Heart left ventricle (tissue), 16 donors: ENCODE measurements at regions of chr17 and their contacts with region 1.

Region 1: DNA sequence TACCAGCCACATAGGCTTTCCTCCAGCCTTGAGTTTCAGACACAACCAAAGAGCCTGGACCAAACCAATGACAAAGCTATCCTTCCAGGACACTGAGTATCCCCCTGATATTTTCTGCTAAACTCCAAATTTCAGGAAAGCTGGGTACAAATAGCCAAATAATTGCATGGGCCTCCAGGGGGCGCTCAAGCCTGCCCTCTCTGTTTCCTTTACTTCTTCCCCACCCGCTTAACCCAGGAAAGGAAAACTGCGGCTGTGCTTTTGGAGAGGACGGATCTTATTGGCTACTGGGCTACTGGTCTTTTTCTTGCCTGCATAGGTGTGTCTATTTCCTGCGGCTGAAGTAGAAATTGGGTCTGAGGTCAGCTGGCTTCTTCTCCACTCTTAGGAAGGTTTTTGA is 30.1 kb downstream of the GNGT2 start:
- DNase-seq: peak; percentile 55 to 74 (median 66)
- ATAC-seq: peak in 3 of 4 donors; percentile 34 to 75 (median 59)
- H3K4me3 ChIP-seq: no peak overlapping the region
- H3K27ac ChIP-seq: no peak overlapping the region
- H3K4me1 ChIP-seq: no peaks in the 10 kb centered on the region
- H3K27me3 ChIP-seq: no peaks in the 10 kb centered on the region
- CTCF ChIP-seq: peak; percentile 60 to 83 (median 76)
- POLR2A ChIP-seq: no peak

Region 2: DNA sequence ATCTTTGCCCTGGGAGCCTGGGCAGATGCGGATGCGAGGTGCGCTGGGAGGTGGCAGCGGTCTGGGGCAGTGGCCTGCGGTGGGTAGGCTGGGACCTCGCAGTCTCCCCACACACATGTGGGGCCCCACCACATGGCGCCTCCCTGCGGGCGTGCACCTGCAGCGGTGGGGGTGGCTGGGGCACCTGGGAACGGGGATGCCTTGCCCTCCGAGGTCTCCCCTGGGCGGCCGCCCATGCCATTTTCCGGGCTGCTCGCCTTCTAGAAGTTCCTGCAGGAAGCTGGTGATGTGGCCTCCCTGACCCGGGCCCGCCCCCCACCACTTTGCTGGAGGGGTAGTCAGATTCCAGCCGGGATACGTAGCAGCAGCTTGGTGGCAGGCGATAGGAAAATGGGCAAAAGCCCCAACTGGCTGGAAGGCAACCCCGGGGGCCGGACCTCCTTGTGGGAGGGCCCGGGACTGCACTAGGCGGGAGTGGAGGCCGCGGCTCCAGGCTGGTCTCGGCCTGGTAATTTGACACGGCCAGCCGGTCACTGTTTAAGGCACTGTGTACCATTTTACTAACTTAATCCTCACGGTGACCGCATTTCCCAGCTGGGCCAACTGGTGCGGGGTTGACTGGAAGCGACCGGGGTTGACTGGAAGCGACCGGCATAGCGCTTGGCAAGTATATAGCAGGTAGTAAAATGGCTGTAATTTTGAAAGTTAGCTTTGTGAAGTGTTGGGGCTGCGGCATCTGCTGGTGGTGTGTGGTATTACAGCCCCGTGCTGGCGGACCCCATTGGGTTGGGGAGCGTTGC is 144.6 kb before region 1 on chr17:
- intact Hi-C with region 1: no loop called
- DNase-seq: no peak
- ATAC-seq: peak; percentile 37 to 63 (median 56)
- H3K4me3 ChIP-seq: peak overlapping the region in 8 of 12 donors; percentile 1 to 38 (median 32)
- H3K27ac ChIP-seq: no peak overlapping the region
- H3K4me1 ChIP-seq: peaks cover 0 to 3% (median 0%) of the 10 kb centered on the region in 12 donors
- H3K27me3 ChIP-seq: peaks cover 0 to 52% (median 3%) of the 10 kb centered on the region in 9 donors
- CTCF ChIP-seq: peak; percentile 45 to 72 (median 65)
- POLR2A ChIP-seq: no peak

Region 3: DNA sequence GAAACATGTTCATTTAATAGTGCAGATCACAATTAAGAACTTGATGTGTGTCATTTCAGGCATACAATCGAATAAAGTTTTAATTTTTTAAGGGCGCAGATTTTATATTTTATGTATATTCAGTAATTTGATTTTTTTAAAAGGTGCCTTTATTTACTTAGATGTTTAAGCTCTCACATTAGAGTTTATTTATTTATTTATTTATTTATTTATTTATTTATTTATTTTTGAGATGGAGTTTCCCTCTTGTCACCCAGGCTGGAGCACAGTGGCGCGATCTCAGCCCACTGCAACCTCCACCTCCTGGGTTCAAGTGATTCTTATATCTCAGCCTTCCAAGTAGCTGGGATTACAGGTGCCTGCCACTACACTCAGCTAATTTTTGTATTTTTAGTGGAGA is 44.0 kb before region 1 on chr17:
- intact Hi-C with region 1: no loop called
- DNase-seq: no peak
- ATAC-seq: no peak
- H3K4me3 ChIP-seq: no peak overlapping the region
- H3K27ac ChIP-seq: no peak overlapping the region
- H3K4me1 ChIP-seq: peaks cover 0 to 10% (median 0%) of the 10 kb centered on the region in 12 donors
- H3K27me3 ChIP-seq: peaks cover 15 to 63% (median 37%) of the 10 kb centered on the region in 9 donors
- CTCF ChIP-seq: no peak
- POLR2A ChIP-seq: no peak

Region 4: GRCh38 chr17:49285716-49286115 is 105.4 kb after region 1 on chr17:
- intact Hi-C with region 1: loop called in 9 of 10 experiments (anchors 2 to 5 kb)
- DNase-seq: no peak
- ATAC-seq: no peak
- H3K4me3 ChIP-seq: no peak overlapping the region
- H3K27ac ChIP-seq: no peak overlapping the region
- H3K4me1 ChIP-seq: no peaks in the 10 kb centered on the region
- H3K27me3 ChIP-seq: no peaks in the 10 kb centered on the region
- CTCF ChIP-seq: no peak
- POLR2A ChIP-seq: no peak

Region 5: DNA sequence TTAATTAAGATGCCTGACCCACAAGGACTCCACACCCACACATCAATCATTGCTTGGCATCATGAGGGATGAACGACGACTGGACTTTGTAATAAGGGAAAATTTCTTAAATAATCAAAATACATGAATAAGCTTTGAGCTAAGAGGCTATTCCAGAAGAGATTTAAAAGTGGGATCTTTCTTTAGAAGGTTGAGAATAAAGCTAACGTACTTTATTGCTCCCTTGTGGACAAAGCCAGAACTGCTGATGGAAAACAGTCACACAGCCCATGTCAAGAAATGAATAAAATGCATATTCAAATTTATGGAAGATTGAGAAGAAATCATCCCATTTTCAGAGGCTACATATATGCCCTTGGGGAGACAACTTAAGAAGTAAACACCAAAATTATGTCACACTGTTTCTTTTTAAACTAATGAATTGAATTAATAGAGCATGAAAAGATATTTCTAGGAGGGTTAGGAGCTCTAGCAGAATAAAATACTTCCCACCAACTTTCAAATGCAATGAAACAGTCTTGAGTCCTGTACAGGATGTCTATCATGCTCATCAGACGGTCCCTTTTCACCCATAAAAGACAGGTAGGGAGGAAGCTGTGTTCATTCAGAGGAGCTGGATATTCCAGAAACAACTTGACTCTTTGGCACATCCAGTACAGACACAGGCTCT is 110.5 kb after region 1 on chr17:
- intact Hi-C with region 1: loop called in 9 of 10 experiments (anchors 2 to 5 kb)
- DNase-seq: no peak
- ATAC-seq: peak in 2 of 4 donors; percentile 41 to 45
- H3K4me3 ChIP-seq: no peak overlapping the region
- H3K27ac ChIP-seq: no peak overlapping the region
- H3K4me1 ChIP-seq: no peaks in the 10 kb centered on the region
- H3K27me3 ChIP-seq: no peaks in the 10 kb centered on the region
- CTCF ChIP-seq: peak; percentile 60 to 83 (median 72)
- POLR2A ChIP-seq: no peak